Prostate gland (tissue), 2 donors: ENCODE measurements at regions of chr5 and their contacts with region 1.

Region 1: GRCh38 chr5:54480296-54480695 is 24.8 kb downstream of the HSPB3 start:
- DNase-seq: no peak
- H3K4me3 ChIP-seq: no peak overlapping the region
- H3K27ac ChIP-seq: no peak overlapping the region
- H3K4me1 ChIP-seq: no peaks in the 10 kb centered on the region
- H3K27me3 ChIP-seq: no peaks in the 10 kb centered on the region
- CTCF ChIP-seq: no peak
- POLR2A ChIP-seq: no peak

Region 2: DNA sequence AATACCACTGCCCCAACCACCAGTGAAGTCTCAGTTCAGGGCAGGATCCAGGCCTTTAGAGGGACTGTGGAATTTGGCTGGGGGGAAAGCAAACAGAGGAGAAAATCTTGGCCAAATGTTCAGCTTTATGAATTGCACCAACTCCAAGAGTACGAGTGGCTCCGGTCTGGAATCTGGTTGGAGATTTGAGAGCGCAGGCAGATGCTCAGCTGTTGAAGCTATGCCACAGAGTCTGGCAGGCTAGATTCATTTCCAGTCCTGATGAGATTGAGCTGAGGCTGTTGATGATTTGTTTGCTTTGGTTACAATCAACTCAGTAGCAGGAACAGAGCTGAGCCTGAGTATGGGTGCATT is 33.9 kb before region 1 on chr5:
- intact Hi-C with region 1: loop called (anchors 5 kb)
- DNase-seq: no peak
- H3K4me3 ChIP-seq: no peak overlapping the region
- H3K27ac ChIP-seq: peak overlapping the region in 1 of 2 donors; percentile 12
- H3K4me1 ChIP-seq: no peaks in the 10 kb centered on the region
- H3K27me3 ChIP-seq: no peaks in the 10 kb centered on the region
- CTCF ChIP-seq: no peak
- POLR2A ChIP-seq: no peak